Activated B cell treated with CpG ODN at 0.5 μM for 24 hours (primary cell): ENCODE measurements at regions of chr22 and their contacts with region 1.

Region 1: GRCh38 chr22:42070517-42071422 is at the start of gene NAGA:
- DNase-seq: peak; percentile 76
- ATAC-seq: peak; percentile 96
- H3K4me3 Mint-ChIP-seq: peak within 1 kb of the TSS; percentile 89
- H3K27ac Mint-ChIP-seq: peak within 1 kb of the TSS; percentile 89
- H3K4me1 Mint-ChIP-seq: peaks cover 32% of the 10 kb centered on the region
- H3K27me3 Mint-ChIP-seq: no peaks in the 10 kb centered on the region
- CTCF ChIP-seq: no peak
- total RNA-seq, gene NAGA: 24.3 and 26.8 TPM in 2 replicates

Region 2: DNA sequence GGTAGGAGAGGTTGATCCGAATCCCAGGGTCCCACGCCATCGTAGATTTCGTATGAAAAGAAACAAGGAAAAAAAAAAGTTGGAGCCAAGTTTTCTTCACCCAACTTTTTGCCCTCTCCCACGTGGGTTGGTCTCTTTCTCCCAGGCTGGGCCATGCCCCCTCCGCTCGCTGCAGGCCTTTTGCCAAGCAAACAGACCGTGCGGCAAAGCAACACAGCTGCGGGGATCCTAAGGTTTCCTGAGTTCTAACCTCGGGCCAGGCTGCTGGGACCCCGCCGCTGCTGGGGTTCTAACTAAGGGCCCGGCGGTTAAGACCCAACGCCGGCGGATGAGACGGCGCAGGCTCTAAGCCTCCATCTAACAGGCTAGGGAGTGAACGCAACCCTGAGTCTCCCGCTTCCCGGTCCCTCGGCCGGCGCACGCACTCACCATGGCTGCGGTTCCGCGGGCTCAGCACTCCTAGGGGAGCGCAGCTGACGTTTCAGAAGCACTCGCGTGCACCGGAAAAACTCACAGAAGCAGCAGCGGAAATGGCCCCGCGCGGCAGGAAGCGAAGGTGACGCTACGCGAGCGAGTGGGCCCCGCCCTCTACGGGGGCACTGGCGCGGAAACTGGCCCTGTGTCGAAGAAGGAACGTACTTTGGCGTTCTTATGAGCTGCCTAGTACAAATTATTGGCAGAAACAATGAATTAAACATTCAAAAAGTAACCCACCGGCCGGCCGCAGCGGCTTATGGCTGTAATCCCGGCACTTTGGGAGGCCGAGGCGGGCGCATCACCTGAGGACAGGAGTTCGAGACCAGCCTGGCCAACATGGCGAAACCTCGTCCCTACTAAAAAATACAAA is 382.2 kb before region 1 on chr22 and contains the start of gene SNU13:
- CTCF ChIA-PET with region 1: no interaction called
- POLR2A ChIA-PET with region 1: no interaction called
- intact Hi-C with region 1: loop called (anchors 5 kb)
- DNase-seq: peak; percentile 88
- ATAC-seq: peak; percentile 94
- H3K4me3 Mint-ChIP-seq: peak within 1 kb of the TSS; percentile 97
- H3K27ac Mint-ChIP-seq: peak within 1 kb of the TSS; percentile 96
- H3K4me1 Mint-ChIP-seq: peaks cover 28% of the 10 kb centered on the region
- H3K27me3 Mint-ChIP-seq: no peaks in the 10 kb centered on the region
- CTCF ChIP-seq: no peak
- total RNA-seq, gene SNU13: 157 and 165 TPM in 2 replicates

Region 3: GRCh38 chr22:41966607-41967240 is 104.0 kb before region 1 on chr22:
- CTCF ChIA-PET with region 1: no interaction called
- POLR2A ChIA-PET with region 1: interaction called, 11 read pairs
- intact Hi-C with region 1: loop called (anchors 2 kb)
- DNase-seq: no peak
- ATAC-seq: peak; percentile 89
- H3K4me3 Mint-ChIP-seq: no peak overlapping the region
- H3K27ac Mint-ChIP-seq: no peak overlapping the region
- H3K4me1 Mint-ChIP-seq: no peaks in the 10 kb centered on the region
- H3K27me3 Mint-ChIP-seq: peaks cover 10% of the 10 kb centered on the region
- CTCF ChIP-seq: no peak

Region 4: DNA sequence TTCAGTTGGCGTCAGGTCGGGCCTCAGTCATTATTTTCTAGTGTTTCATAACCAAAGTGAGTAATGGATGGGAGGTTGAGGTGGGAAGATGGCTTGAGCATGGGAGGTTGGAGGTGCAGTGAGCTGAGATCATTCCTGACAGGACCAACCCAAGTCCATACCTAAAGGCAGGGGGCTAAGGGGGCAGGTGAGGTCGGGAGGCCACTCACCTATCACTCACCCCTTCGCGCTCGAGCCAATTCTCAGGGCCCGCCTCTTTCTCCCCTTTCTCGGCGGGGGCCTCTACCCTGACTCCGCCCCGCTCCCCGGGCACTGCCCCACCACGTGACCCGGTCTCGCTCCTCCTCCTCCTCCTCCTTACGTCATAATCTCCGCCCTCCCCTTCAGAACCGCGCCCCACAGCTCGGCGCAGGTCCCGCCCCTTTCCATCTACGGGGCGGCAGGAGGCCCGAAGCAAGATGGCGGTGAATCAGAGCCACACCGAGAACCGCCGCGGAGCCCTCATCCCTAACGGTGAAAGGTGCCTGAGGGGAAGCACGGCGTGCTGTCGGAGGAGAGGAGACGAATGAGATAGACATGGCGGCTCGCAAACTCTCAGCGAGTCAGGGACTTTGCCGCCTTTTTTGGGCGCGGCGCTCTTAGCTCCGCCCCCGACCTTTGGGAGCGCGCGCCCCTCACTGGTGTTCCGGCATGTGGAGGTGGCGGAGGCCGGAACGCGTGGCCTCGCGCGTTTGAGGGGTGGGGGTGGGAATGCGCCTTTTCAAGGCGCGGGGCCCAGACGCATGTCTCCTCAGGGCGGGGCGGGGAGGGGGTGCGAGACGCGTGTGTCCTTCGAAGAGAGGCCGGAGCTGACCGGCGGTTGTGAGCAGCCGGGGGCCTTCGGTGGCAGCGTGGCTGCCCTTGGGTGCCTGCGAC is 72.2 kb before region 1 on chr22 and contains the start of gene WBP2NL:
- CTCF ChIA-PET with region 1: no interaction called
- POLR2A ChIA-PET with region 1: interaction called, 20 read pairs
- intact Hi-C with region 1: loop called (anchors 1 kb)
- DNase-seq: peak; percentile 83
- ATAC-seq: peak; percentile 96
- H3K4me3 Mint-ChIP-seq: peak within 1 kb of the TSS; percentile 98
- H3K27ac Mint-ChIP-seq: peak within 1 kb of the TSS; percentile 98
- H3K4me1 Mint-ChIP-seq: peaks cover 22% of the 10 kb centered on the region
- H3K27me3 Mint-ChIP-seq: no peaks in the 10 kb centered on the region
- CTCF ChIP-seq: no peak
- total RNA-seq, gene WBP2NL: 6.8 and 7.8 TPM in 2 replicates

Region 5: DNA sequence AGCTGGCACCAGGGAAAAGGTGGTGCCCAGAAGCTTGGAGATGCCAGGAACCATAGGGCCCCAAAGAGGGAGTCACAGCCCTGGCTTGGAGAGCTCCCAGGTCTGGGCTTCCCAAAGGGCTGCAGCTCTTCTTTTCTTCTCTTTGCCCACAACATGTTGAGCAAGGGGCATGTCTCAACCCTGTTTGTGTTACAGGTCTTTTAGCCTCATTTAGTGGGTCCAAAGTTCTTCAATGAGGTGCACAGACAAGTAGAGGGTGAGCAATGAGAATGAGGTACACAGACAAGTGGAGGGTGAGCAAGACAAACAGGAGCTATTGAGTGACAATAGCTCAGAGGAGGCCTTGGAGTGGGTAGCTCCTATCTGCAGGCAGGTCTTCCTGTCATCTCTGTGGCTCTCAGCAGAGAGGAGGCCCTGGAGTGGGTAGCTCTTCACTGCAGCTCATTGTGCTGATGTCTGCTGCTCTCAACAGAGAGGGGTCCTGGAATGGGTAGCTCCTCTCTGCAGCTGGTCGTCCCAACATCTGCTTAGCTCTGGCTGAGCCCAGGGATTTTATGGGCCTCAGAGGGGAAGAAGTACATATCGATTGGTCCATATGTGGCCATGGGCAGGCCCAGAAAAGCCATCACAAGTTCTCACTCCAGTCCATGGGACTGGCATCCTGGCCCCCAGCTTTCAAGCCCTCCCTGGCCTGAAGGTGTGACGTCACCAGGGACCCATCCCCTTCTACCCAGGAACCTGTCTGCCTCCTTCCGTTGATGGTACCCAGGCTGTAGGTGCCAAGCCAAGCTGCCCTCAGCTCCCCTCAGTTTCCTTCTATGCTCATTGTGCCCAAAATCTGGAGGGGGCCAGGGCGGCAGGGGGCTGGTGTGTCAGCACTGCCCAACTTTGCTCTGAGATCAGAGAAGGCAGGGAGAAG is 37.2 kb before region 1 on chr22:
- CTCF ChIA-PET with region 1: no interaction called
- POLR2A ChIA-PET with region 1: interaction called, 6 read pairs
- intact Hi-C with region 1: loop called (anchors 1 kb)
- DNase-seq: no peak
- ATAC-seq: no peak
- H3K4me3 Mint-ChIP-seq: no peak overlapping the region
- H3K27ac Mint-ChIP-seq: no peak overlapping the region
- H3K4me1 Mint-ChIP-seq: peaks cover 35% of the 10 kb centered on the region
- H3K27me3 Mint-ChIP-seq: no peaks in the 10 kb centered on the region
- CTCF ChIP-seq: no peak